A673 (cell line): ENCODE measurements at regions of chr13 and their contacts with region 1.

Region 1: GRCh38 chr13:47598340-47598911 is 402.6 kb downstream of the SUCLA2 start:
- DNase-seq: peak; percentile 19
- H3K4me3 ChIP-seq: no peak overlapping the region
- H3K27ac ChIP-seq: no peak overlapping the region
- H3K4me1 ChIP-seq: no peaks in the 10 kb centered on the region
- H3K27me3 ChIP-seq: peaks cover 18% of the 10 kb centered on the region
- CTCF ChIP-seq: peak; percentile 51; the same call in 1 of the 2 replicates

Region 2: DNA sequence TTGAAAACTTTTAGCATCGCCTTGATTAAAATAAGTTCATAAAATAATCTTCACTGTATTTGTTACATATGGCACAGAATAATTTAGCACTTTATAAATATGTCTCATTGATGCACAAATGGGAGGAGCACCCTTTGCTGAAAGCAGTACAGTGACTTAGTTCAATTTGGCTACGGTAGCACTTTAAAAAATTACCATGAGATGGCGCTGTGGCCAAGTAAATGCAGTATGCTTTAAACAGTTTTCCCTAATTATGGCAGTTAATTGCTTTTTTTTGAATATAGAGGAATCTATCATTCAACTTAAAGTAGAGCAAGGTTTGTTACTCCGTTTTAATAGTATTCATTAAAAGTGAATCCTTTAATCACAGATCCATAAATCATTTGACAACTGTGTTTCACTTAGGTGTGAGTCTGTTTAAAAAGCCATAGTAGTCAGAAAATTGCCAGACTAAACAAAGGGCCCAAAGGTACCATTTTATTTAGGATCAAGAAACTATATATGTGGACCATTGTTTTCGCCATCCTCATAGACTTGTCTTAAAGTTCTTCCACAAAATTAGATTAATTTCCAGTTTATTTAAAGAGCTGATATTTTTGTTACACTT is 766.7 kb before region 1 on chr13:
- CTCF ChIA-PET with region 1: no interaction called
- POLR2A ChIA-PET with region 1: no interaction called
- intact Hi-C with region 1: loop called (anchors 5 kb)
- DNase-seq: peak; percentile 69
- H3K4me3 ChIP-seq: no peak overlapping the region
- H3K27ac ChIP-seq: no peak overlapping the region
- H3K4me1 ChIP-seq: no peaks in the 10 kb centered on the region
- H3K27me3 ChIP-seq: no peaks in the 10 kb centered on the region
- CTCF ChIP-seq: peak; percentile 90

Region 3: DNA sequence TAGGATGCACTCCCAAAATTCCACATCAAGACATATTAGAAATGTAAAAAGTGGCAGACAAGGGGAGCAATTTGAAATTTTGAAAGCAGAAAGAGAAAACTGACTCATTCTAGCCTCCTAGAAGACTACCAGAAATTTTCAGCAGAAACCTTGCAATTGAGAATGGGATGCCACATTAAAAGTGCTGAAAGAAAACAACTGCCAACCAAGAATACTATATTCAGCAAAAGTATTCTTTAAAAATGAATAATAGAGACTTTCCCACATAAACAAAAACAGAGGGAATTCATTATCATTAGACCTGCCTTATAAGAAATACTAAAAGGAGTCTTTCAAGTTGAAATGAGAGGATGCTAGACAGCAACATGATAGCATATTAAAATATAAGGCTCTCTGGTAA is 623.3 kb before region 1 on chr13:
- CTCF ChIA-PET with region 1: interaction called, 4 read pairs
- POLR2A ChIA-PET with region 1: no interaction called
- intact Hi-C with region 1: loop called (anchors 10 kb)
- DNase-seq: no peak
- H3K4me3 ChIP-seq: no peak overlapping the region
- H3K27ac ChIP-seq: no peak overlapping the region
- H3K4me1 ChIP-seq: no peaks in the 10 kb centered on the region
- H3K27me3 ChIP-seq: peaks cover 4% of the 10 kb centered on the region
- CTCF ChIP-seq: no peak